ENCODE measurements at regions of chr11 and their contacts with region 1.

Region 1: DNA sequence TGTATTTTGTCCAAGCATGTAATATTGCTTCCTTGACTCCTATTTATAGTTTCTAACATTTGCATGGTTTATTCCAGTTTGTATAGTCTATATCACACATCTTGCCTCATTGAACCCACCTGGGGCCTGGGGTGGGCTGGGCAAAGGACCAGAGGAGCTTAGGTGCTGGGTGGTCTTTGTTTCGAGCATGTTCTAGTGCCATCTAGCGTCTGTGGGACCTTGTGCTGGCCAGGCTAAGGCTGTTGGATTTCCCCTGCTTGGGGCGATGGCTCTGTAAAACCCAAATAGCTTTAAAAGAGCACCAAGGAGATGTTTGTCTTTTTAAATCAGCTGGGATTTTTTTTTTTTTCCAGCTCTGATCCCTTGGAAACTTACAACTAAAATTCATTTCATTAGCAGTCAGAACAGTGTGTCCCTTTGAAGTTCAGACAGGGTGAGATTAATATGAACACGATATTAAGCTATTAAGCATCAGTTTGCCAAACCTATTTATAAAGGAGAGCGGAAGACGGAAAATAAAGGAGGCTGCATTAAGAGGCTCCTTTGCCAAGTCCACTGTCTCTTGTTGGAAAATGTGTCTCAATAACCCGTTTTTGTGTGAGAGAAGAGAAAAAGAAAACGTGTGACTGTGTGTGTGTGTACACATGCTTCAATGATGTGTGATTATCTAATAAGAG is 157.4 kb downstream of the COMMD9 start:
- DNase-seq: no peak
- H3K4me3 ChIP-seq: no peak overlapping the region
- H3K27ac ChIP-seq: no peak overlapping the region
- H3K27me3 ChIP-seq: no peaks in the 10 kb centered on the region
- CTCF ChIP-seq: peak; percentile 82

Region 2: GRCh38 chr11:35953081-35953760 is 178.6 kb before region 1 on chr11:
- CTCF ChIA-PET with region 1: no interaction called
- POLR2A ChIA-PET with region 1: no interaction called
- DNase-seq: no peak
- H3K4me3 ChIP-seq: no peak overlapping the region
- H3K27ac ChIP-seq: no peak overlapping the region
- H3K27me3 ChIP-seq: no peaks in the 10 kb centered on the region
- CTCF ChIP-seq: no peak

Region 3: GRCh38 chr11:36023922-36024321 is 107.9 kb before region 1 on chr11:
- CTCF ChIA-PET with region 1: no interaction called
- POLR2A ChIA-PET with region 1: no interaction called
- DNase-seq: no peak
- H3K4me3 ChIP-seq: no peak overlapping the region
- H3K27ac ChIP-seq: no peak overlapping the region
- H3K27me3 ChIP-seq: no peaks in the 10 kb centered on the region
- CTCF ChIP-seq: no peak

Region 4: GRCh38 chr11:36041988-36042611 is 89.8 kb before region 1 on chr11:
- CTCF ChIA-PET with region 1: interaction called, 22 read pairs
- POLR2A ChIA-PET with region 1: no interaction called
- DNase-seq: no peak
- H3K4me3 ChIP-seq: no peak overlapping the region
- H3K27ac ChIP-seq: no peak overlapping the region
- H3K27me3 ChIP-seq: no peaks in the 10 kb centered on the region
- CTCF ChIP-seq: peak; percentile 66; the same call in 1 of the 2 replicates

Region 5: DNA sequence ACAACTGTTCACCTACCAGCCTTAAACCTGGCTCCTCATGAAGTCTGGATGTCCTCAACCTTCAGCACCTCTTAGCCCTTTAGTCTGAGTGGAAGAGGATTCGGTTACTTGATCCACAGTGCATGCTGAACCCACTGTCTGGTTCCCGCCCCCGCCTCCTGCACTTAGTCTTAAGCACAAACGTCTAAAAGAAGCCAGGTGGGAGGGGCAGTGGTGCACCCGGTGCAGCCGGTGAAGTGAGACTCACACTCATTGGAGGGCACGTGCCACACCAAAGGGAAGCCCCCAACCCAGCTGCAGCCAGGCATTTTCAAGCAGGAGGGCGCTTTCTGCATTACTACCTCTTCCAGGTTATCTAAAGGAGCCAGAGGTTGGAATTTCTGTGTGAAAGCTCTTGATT is 10.6 kb after region 1 on chr11:
- CTCF ChIA-PET with region 1: interaction called, 16 read pairs
- POLR2A ChIA-PET with region 1: no interaction called
- DNase-seq: no peak
- H3K4me3 ChIP-seq: no peak overlapping the region
- H3K27ac ChIP-seq: no peak overlapping the region
- H3K27me3 ChIP-seq: no peaks in the 10 kb centered on the region
- CTCF ChIP-seq: no peak

Region 6: GRCh38 chr11:36156161-36156816 is 24.4 kb after region 1 on chr11:
- CTCF ChIA-PET with region 1: interaction called, 13 read pairs
- POLR2A ChIA-PET with region 1: no interaction called
- DNase-seq: no peak
- H3K4me3 ChIP-seq: no peak overlapping the region
- H3K27ac ChIP-seq: no peak overlapping the region
- H3K27me3 ChIP-seq: no peaks in the 10 kb centered on the region
- CTCF ChIP-seq: no peak

Region 7: DNA sequence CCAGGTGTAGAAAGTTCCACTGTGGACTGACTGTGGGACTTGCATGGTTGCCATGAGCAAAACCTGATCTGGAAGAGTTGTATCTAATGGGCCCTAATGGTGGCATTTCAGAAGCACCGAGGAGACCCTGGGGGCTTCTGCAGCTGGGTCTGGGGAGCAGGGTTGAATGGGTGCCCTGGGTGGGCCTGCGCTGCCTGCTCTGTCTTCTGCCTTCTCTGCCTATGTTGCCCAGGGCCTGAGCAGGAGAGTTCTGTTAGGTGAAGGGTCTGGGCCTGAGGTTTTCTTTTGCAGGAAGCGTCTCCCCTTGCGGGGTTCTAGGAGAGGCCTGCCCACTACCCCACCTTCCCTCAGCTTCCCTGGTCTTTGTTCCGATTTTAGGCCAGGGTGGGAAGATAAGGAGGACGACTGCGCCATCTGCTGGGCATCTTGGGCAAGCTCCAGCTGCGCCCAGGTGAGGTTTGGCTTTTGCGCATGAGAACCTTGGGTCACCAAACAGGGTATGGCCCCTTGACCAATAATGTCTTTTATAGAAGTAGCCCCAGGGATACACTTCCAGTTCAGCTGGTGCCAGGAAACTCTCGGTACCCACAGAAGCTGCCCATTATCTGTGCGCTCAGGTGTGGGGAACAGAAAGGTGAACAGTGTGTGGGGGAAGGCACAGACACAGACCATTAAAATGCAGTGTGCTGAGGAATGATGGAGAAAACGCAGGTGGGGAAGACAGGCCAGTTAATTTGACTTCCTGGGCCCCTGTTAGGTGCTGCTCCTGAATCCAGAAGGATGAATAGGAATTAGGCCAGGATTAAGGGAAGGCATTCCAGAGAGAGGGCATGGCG is 134.2 kb after region 1 on chr11:
- CTCF ChIA-PET with region 1: interaction called, 12 read pairs
- POLR2A ChIA-PET with region 1: no interaction called
- DNase-seq: no peak
- H3K4me3 ChIP-seq: no peak overlapping the region
- H3K27ac ChIP-seq: no peak overlapping the region
- H3K27me3 ChIP-seq: peaks cover 8% of the 10 kb centered on the region
- CTCF ChIP-seq: peak; percentile 89